Colonic mucosa (tissue), 4 donors: ENCODE measurements at regions of chr6 and their contacts with region 1.

Region 1: DNA sequence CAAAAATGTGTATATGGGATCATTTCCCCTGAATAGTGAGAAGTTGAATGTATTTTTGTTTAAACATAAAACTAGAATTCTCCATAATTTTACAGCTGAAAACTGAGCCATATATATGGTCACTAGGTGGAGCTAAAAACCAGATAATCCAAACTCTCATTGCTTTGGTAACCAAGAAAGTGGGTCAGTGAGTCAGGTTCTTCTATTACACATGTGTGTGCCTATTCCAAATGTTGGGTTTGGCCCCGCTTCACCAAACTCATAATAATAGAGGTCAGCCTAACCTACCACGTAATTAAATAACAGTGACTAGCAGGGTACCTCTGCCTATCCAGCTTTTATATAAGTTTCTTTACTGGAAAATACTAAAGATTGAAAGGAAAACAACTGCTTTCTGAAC is 19.3 kb upstream of the RNGTT start:
- DNase-seq: no peak
- H3K4me3 ChIP-seq: no peak overlapping the region
- H3K27ac ChIP-seq: no peak overlapping the region
- H3K4me1 ChIP-seq: no peaks in the 10 kb centered on the region
- H3K27me3 ChIP-seq: no peaks in the 10 kb centered on the region
- CTCF ChIP-seq: peak; percentile 53

Region 2: DNA sequence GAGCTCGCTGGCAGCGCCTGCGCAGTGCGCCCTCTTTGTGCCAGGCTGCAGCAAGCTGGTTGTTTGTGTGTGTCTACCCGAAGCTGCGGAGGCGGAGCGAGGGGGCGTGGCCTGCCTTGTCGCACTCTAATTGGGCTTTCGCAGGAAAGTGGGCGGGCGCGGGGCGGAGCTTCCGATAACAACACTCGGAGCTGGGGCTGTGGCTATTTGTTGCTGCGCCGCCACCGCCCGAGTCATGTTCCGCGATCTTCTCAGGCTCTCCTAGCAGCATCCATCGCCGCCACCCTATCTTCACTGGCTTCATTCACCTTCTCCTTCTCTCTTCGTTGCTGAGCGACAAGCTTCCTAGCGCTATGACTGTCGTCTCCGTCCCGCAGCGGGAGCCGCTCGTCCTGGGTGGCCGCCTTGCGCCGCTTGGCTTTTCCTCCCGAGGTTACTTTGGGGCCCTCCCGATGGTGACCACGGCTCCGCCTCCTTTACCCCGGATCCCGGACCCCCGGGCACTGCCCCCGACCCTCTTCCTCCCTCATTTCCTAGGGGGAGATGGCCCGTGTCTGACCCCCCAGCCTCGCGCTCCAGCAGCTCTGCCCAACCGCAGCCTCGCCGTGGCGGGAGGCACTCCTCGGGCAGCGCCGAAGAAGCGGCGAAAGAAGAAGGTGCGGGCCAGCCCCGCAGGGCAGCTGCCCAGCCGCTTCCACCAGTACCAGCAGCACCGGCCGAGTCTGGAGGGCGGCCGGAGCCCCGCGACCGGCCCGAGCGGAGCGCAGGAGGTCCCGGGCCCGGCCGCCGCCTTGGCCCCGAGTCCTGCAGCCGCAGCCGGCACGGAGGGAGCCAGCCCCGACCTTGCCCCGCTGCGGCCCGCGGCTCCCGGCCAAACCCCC is 98.1 kb after region 1 on chr6 and contains the start of gene PNRC1:
- intact Hi-C with region 1: loop called (anchors 10 kb)
- DNase-seq: peak; percentile 100
- H3K4me3 ChIP-seq: peak within 1 kb of the TSS; percentile 78
- H3K27ac ChIP-seq: peak within 1 kb of the TSS; percentile 99
- H3K4me1 ChIP-seq: no peaks in the 10 kb centered on the region
- H3K27me3 ChIP-seq: no peaks in the 10 kb centered on the region
- CTCF ChIP-seq: no peak
- total RNA-seq, gene PNRC1: 47.8 to 143 TPM

Region 3: DNA sequence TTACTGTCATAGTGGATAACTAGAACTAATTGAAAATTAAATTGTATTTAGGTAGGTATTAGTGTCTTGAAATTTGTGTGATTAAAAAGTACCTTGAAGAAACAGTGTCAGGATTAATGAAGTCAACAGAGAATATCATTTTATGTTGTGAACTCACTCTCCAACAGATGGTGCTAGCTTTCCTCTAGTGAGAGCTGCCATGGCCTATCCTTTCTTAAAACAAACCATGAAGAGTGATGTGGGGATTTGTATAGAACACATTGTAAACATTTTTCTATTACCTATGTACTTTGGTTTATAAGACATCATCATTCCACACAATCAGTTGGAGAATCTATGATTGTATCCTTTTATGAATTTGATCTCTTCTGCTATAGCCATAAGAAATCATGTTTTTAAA is 139.9 kb after region 1 on chr6:
- intact Hi-C with region 1: loop called (anchors 5 kb)
- DNase-seq: no peak
- H3K4me3 ChIP-seq: no peak overlapping the region
- H3K27ac ChIP-seq: no peak overlapping the region
- H3K4me1 ChIP-seq: no peaks in the 10 kb centered on the region
- H3K27me3 ChIP-seq: no peaks in the 10 kb centered on the region
- CTCF ChIP-seq: peak; percentile 35

Region 4: DNA sequence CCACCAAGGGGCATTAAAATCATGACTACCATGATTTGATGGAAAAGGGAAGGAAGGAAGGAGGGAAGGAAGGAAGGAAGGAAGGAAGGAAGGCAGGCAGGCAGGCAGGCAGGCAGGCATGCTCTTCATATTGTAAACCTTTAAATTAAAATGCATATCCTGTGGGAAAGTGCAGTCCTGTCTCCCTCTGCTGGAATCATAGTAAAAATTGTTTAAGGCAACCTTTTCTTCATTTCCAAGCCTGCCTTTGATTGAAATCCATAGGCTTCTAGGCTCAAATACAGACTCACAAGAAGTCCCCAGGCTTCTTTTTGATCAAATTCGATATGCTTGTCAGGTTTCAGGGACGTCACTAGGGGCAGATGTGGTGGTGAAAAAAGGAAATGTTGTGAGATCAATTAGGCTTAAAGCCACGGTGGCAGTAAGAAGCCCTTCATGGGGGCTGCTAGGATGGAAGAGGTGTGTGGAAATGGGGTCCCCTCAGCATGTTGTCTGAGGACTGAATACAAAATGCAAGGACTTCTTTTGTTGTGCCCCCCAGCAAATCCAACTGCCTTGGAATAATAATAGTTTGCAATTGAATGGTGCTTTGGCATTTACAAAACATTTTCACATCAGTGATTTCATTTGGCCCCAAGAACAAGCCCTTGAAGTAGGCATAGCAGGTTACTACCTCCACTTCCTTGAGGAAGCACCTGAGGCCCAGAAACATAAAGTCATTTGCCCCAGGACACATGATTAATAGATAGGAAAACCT is 260.0 kb after region 1 on chr6:
- intact Hi-C with region 1: loop called (anchors 2 kb)
- DNase-seq: no peak
- H3K4me3 ChIP-seq: no peak overlapping the region
- H3K27ac ChIP-seq: no peak overlapping the region
- H3K4me1 ChIP-seq: no peaks in the 10 kb centered on the region
- H3K27me3 ChIP-seq: no peaks in the 10 kb centered on the region
- CTCF ChIP-seq: peak; percentile 34

Region 5: DNA sequence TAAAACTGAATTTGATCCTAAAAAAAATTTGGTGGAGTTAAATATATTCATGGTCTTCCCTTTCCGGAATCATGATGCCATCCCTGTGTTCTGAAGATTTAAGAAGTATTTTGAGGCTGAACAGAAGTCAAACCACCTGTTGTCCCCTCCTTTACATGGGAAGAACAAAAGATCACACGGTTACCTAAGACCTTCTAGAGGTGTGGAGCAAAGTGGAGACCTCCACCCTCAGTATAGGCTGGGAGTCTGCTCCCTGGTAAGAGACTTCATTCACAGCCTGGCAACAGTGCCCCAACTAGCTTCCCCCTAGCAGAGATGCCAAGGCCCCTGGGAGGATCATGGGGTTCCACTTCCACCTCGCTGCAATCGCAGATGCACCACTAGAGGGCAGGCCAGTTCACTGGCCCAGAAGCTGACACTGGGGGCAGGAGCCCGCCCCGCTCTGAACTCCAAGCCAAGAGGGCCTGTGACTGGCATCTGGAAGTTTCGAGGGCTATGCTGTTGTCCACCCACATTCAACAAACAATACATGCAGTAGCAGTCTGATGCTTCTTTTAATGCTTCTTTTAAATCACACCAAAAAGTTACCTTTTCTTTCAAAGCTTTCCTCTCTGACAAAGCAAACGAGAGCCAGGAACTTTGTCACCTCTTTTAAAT is 389.3 kb after region 1 on chr6:
- intact Hi-C with region 1: loop called (anchors 5 kb)
- DNase-seq: peak; percentile 76
- H3K4me3 ChIP-seq: no peak overlapping the region
- H3K27ac ChIP-seq: no peak overlapping the region
- H3K4me1 ChIP-seq: no peaks in the 10 kb centered on the region
- H3K27me3 ChIP-seq: no peaks in the 10 kb centered on the region
- CTCF ChIP-seq: peak; percentile 84